ENCODE measurements at regions of chr11 and their contacts with region 1.

Region 1: GRCh38 chr11:134040386-134041302 is 28.2 kb upstream of the JAM3 start:
- DNase-seq: no peak
- ATAC-seq: no peak
- H3K4me3 ChIP-seq: no peak overlapping the region
- H3K27ac ChIP-seq: no peak overlapping the region
- H3K4me1 ChIP-seq: peaks cover 31% of the 10 kb centered on the region
- H3K27me3 ChIP-seq: no peaks in the 10 kb centered on the region
- CTCF ChIP-seq: no peak

Region 2: GRCh38 chr11:133911171-133911570 is 129.5 kb before region 1 on chr11:
- intact Hi-C with region 1: no loop called
- DNase-seq: no peak
- ATAC-seq: no peak
- H3K4me3 ChIP-seq: no peak overlapping the region
- H3K27ac ChIP-seq: no peak overlapping the region
- H3K4me1 ChIP-seq: no peaks in the 10 kb centered on the region
- H3K27me3 ChIP-seq: no peaks in the 10 kb centered on the region
- CTCF ChIP-seq: no peak

Region 3: GRCh38 chr11:133966921-133967598 is 73.6 kb before region 1 on chr11:
- intact Hi-C with region 1: loop called in 1 of 2 experiments (anchors 5 kb)
- DNase-seq: peak; percentile 47 to 76
- ATAC-seq: peak; percentile 63 to 87 (median 69)
- H3K4me3 ChIP-seq: peak overlapping the region; percentile 27
- H3K27ac ChIP-seq: no peak overlapping the region
- H3K4me1 ChIP-seq: peaks cover 4% of the 10 kb centered on the region
- H3K27me3 ChIP-seq: no peaks in the 10 kb centered on the region
- CTCF ChIP-seq: peak; percentile 53

Measured in psoas muscle (tissue), 8 donors.